Breast epithelium (tissue), 4 donors: ENCODE measurements at regions of chr5 and their contacts with region 1.

Region 1: GRCh38 chr5:139968547-139969261 is 74.4 kb downstream of the NRG2 start:
- DNase-seq: peak; percentile 89 to 91
- H3K4me3 ChIP-seq: no peak overlapping the region
- H3K27ac ChIP-seq: peak overlapping the region in 1 of 2 donors; percentile 11
- H3K4me1 ChIP-seq: peaks cover 0 to 5% of the 10 kb centered on the region in 2 donors
- H3K27me3 ChIP-seq: no peaks in the 10 kb centered on the region
- CTCF ChIP-seq: peak; percentile 98 to 100 (median 100)
- POLR2A ChIP-seq: no peak

Region 2: GRCh38 chr5:139795074-139796001 is 173.4 kb before region 1 on chr5 and contains the start of gene PSD2:
- intact Hi-C with region 1: loop called (anchors 10 kb)
- DNase-seq: no peak
- H3K4me3 ChIP-seq: peak within 1 kb of the TSS; percentile 23 to 76 (median 58)
- H3K27ac ChIP-seq: no peak within 1 kb of the TSS
- H3K4me1 ChIP-seq: peaks cover 6 to 7% of the 10 kb centered on the region in 2 donors
- H3K27me3 ChIP-seq: peaks cover 18 to 20% of the 10 kb centered on the region in 2 donors
- CTCF ChIP-seq: no peak
- POLR2A ChIP-seq: no peak
- total RNA-seq, gene PSD2: 0.66 to 1.8 TPM in 2 of 3 donors, not detected in the other